ENCODE measurements at regions of chr1 and their contacts with region 1.

Region 1: DNA sequence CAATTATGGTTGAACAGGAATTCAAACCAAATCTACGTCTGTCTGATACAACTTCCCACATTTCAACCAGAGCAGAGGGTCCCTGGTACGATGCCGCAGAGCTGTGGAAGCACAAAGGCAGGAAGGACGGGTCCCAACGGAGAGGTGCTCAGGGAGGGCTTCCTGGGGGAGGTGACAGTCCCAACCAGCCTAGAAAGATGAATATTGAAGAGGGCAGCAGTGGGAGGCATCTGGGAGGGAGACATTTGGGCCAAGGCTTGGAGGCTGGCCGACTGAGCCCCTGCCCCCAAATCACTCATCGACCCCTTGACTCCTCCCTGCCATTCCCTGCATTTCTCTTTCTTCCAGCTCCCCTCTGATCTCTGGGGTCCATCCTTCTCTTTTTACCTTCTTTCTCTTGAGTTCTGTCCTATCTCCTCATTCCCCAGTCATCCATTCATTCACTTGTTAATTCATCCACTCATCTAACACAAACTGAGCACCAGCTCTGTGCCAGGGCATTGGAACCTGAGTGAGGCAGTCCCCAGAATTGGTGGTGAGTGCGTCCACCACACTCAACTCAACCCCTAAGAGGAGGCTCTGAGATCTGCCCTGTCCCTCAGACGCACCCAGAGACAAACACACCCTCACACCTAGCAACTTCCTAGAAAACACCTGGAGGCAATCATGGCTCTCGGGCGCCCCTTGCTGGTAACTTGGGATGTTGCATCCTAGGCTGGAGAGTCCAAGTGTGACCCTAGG is 13.2 kb upstream of the CELA3B start:
- DNase-seq: peak; percentile 91
- ATAC-seq: peak; percentile 99
- H3K4me3 Mint-ChIP-seq: no peak overlapping the region
- H3K27ac Mint-ChIP-seq: peak overlapping the region; percentile 21
- H3K4me1 Mint-ChIP-seq: peaks cover 4% of the 10 kb centered on the region
- H3K27me3 Mint-ChIP-seq: no peaks in the 10 kb centered on the region
- CTCF ChIP-seq: peak; percentile 89

Region 2: DNA sequence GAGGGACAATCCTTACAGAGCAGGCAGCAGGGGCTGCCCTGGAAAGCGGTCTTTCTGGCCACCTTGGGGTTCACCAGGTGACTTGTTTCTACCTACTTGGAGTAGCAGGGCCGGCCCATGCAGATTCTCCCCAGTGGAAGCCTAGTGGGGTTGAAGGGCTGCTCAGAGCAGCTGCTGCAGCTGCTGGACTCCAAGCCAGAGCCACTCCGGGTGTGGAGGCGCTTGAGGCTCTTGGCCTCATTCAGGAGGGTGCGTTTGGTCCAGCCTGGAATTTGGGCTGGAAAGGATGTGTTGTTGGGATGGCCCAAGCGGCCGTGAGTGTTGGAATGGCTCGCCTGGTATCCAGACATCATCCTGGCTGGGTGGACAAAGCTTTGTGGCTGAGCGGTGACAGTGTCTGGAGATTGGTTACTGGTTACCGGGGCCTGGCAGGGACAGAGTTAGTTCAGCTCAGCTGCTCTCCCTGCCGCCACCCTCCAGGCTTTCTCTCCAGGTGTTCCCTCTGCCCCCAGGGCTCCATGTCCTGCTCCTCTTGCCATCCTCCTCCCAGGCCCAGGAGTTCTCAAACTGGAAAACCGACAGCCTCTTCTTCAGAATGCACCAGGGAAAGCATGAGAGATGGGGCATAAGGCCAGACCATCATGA is 12.3 kb before region 1 on chr1:
- CTCF ChIA-PET with region 1: interaction called, 11 read pairs
- POLR2A ChIA-PET with region 1: no interaction called
- intact Hi-C with region 1: no loop called
- DNase-seq: no peak
- ATAC-seq: no peak
- H3K4me3 Mint-ChIP-seq: no peak overlapping the region
- H3K27ac Mint-ChIP-seq: no peak overlapping the region
- H3K4me1 Mint-ChIP-seq: peaks cover 9% of the 10 kb centered on the region
- H3K27me3 Mint-ChIP-seq: no peaks in the 10 kb centered on the region
- CTCF ChIP-seq: no peak

Measured in activated CD8-positive, alpha-beta T cell treated with anti-CD3 and anti-CD28 coated beads for 36 hours (primary cell).